PC-9 (cell line): ENCODE measurements at regions of chr6 and their contacts with region 1.

Region 1: DNA sequence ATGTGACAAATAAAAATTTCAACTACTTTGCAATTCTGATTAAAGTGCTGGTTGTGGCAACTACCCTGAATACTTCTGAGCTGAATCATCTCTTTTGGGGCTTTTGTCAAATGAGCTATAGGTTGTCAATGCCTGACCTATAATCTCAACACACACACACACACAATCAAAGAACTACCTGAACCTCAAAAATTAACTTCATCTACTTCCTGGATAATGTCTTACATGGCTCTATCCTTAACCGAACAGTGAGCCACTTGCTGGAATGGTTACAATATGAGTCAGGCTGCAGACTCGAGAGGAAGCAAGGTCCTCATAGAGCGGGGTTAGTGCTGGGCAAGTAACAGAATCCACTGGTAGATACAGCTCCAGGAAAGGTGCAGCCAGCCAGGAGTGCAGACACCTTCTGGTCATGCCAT is 70.6 kb upstream of the DST start:
- DNase-seq: peak; percentile 68 to 97
- H3K4me3 ChIP-seq: peak overlapping the region; percentile 37; the same call in 1 of the 2 replicates
- H3K27ac ChIP-seq: peak overlapping the region; percentile 85
- H3K4me1 ChIP-seq: peaks cover 67% of the 10 kb centered on the region
- H3K27me3 ChIP-seq: no peaks in the 10 kb centered on the region
- CTCF ChIP-seq: no peak

Region 2: GRCh38 chr6:56416247-56416646 is 297.0 kb before region 1 on chr6:
- CTCF ChIA-PET with region 1: no interaction called
- POLR2A ChIA-PET with region 1: no interaction called
- intact Hi-C with region 1: no loop called
- DNase-seq: no peak
- H3K4me3 ChIP-seq: no peak overlapping the region
- H3K27ac ChIP-seq: no peak overlapping the region
- H3K4me1 ChIP-seq: no peaks in the 10 kb centered on the region
- H3K27me3 ChIP-seq: no peaks in the 10 kb centered on the region
- CTCF ChIP-seq: no peak

Region 3: DNA sequence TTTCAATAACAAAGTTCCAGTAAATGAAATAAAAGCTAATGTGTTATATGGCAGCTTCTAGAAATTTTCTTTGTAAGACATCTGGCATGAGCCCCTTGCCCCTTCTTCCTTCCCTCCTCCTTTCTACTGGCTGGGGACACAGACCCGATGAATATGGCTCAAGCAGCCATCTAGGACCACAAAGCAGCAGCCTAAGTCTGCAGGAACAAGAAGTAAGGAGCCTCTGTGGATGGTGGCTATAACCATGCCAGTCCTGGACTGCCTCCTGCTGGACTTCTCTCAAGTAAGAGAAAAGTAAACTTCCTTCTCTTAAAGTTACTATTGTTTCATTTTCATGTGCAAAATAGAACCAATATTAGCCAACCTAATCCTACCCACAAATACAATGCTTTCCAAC is 44.3 kb after region 1 on chr6:
- CTCF ChIA-PET with region 1: interaction called, 4 read pairs
- POLR2A ChIA-PET with region 1: no interaction called
- intact Hi-C with region 1: loop called (anchors 5 kb)
- DNase-seq: no peak
- H3K4me3 ChIP-seq: no peak overlapping the region
- H3K27ac ChIP-seq: 0 out of 2 replicates have a peak overlapping the region, but pooled peaks have one; percentile 14
- H3K4me1 ChIP-seq: peaks cover 24% of the 10 kb centered on the region
- H3K27me3 ChIP-seq: no peaks in the 10 kb centered on the region
- CTCF ChIP-seq: peak; percentile 42; the same call in 1 of the 2 replicates

Region 4: GRCh38 chr6:56808871-56809359 is 95.7 kb after region 1 on chr6:
- CTCF ChIA-PET with region 1: no interaction called
- POLR2A ChIA-PET with region 1: interaction called, 3 read pairs
- intact Hi-C with region 1: loop called (anchors 10 kb)
- DNase-seq: peak; percentile 72 to 83
- H3K4me3 ChIP-seq: no peak overlapping the region
- H3K27ac ChIP-seq: peak overlapping the region; percentile 60
- H3K4me1 ChIP-seq: peaks cover 39% of the 10 kb centered on the region
- H3K27me3 ChIP-seq: no peaks in the 10 kb centered on the region
- CTCF ChIP-seq: no peak

Region 5: GRCh38 chr6:56821005-56821432 is 107.8 kb after region 1 on chr6:
- CTCF ChIA-PET with region 1: no interaction called
- POLR2A ChIA-PET with region 1: no interaction called
- intact Hi-C with region 1: no loop called
- DNase-seq: no peak
- H3K4me3 ChIP-seq: no peak overlapping the region
- H3K27ac ChIP-seq: no peak overlapping the region
- H3K4me1 ChIP-seq: no peaks in the 10 kb centered on the region
- H3K27me3 ChIP-seq: no peaks in the 10 kb centered on the region
- CTCF ChIP-seq: no peak